Left ventricle myocardium superior (tissue), 1 donor: ENCODE measurements at regions of chr10 and their contacts with region 1.

Region 1: DNA sequence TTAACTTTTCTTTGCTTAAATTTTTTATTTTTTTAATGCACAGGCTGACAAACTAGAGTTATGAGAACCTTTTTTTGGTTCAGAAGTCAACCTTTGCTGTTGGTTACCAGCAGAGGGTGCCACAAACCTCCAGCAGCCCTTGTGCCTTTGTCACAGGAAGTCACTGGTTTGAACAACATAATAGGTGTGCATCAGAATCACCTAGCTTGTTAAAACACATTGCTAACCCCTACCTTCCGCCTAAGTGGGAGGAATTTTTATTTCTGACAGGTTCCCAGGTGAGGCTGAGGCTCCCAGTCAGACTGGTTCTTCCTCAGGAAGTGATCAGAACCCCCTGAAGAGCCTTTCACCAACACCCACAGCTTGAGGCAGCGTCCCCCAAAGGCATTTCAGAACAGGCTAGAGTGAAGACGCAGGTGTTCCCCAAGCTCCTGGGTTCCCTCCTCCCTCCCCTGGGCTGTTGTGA is 22.6 kb upstream of the VDAC2 start:
- DNase-seq: no peak
- ATAC-seq: peak; percentile 46

Region 2: GRCh38 chr10:75235375-75236177 is 47.6 kb after region 1 on chr10 and contains the start of gene COMTD1:
- intact Hi-C with region 1: loop called (anchors 2 kb)
- DNase-seq: peak; percentile 97
- ATAC-seq: peak; percentile 80
- total RNA-seq, gene COMTD1: 30.8 TPM